ENCODE measurements at regions of chr2 and their contacts with region 1.

Region 1: GRCh38 chr2:226782092-226782713 is 17.4 kb downstream of the IRS1 start:
- DNase-seq: no peak
- H3K4me3 ChIP-seq: no peak overlapping the region
- H3K27ac ChIP-seq: no peak overlapping the region
- H3K4me1 ChIP-seq: no peaks in the 10 kb centered on the region
- H3K27me3 ChIP-seq: no peaks in the 10 kb centered on the region
- CTCF ChIP-seq: no peak

Region 2: GRCh38 chr2:226063704-226064440 is 718.3 kb before region 1 on chr2:
- CTCF ChIA-PET with region 1: no interaction called
- POLR2A ChIA-PET with region 1: interaction called, 12 read pairs
- intact Hi-C with region 1: no loop called
- DNase-seq: peak in 1 of 2 experiments; percentile 73
- H3K4me3 ChIP-seq: no peak overlapping the region
- H3K27ac ChIP-seq: peak overlapping the region; percentile 73
- H3K4me1 ChIP-seq: peaks cover 18% of the 10 kb centered on the region
- H3K27me3 ChIP-seq: no peaks in the 10 kb centered on the region
- CTCF ChIP-seq: no peak

Region 3: DNA sequence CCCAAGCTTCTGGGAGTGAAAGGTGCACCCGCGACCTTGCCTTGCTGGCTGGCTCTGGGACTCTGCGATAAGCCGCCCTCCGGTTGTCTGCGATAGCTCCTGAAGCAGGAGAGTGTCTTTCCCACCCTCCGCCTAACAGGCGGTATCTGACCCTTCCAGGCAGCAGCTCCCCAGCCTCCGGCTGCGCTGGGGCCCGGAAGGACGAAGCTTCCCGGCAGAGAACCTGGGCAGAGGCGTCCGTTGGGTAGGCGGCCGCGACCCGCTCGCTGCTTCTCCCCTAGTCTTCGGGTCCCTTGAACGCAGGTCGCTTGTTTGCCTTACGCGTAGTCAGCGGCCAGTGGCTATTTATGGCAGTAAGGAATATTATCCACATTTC is 53.2 kb after region 1 on chr2:
- CTCF ChIA-PET with region 1: no interaction called
- POLR2A ChIA-PET with region 1: no interaction called
- intact Hi-C with region 1: no loop called
- DNase-seq: no peak
- H3K4me3 ChIP-seq: peak overlapping the region; percentile 75
- H3K27ac ChIP-seq: peak overlapping the region; percentile 98
- H3K4me1 ChIP-seq: peaks cover 29% of the 10 kb centered on the region
- H3K27me3 ChIP-seq: no peaks in the 10 kb centered on the region
- CTCF ChIP-seq: no peak

Region 4: DNA sequence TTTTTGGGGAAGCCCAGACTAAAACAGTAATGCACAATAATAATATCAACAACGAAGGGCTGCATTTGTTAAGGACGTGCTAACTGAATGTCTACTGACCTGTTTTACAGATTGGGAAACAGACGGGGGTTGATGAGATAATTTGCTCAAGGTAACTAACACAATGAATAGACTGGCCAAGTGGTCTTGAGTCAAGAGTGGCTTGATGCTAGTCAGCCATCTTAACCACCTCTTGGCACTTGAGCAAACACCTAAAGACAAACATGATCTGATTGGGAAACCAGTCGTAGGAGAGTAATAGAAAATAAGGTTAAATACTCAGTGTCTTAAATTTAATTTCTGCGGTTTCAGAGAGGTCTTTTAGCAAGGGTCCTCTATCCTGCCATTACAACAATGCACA is 67.8 kb after region 1 on chr2:
- CTCF ChIA-PET with region 1: no interaction called
- POLR2A ChIA-PET with region 1: interaction called, 21 read pairs
- intact Hi-C with region 1: no loop called
- DNase-seq: no peak
- H3K4me3 ChIP-seq: no peak overlapping the region
- H3K27ac ChIP-seq: no peak overlapping the region
- H3K4me1 ChIP-seq: no peaks in the 10 kb centered on the region
- H3K27me3 ChIP-seq: no peaks in the 10 kb centered on the region
- CTCF ChIP-seq: no peak

Region 5: DNA sequence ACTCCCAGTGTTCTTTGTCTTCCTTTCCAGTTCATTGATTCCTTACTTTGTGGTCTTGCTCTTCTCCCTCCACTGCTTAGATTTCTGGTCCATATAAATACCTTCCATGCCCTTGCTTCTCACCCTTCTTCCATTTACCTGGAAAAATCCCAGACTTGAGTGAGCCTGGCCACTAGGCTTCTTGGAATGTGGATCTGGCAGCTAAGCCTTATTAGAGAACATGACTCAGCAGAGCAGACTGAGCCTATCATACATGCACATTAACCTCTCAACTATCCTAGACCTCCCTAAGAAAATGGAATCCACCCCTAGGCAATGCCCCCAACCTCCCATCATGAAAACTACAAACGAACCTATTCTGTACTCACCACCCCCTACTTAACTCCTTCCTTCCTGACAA is 181.3 kb after region 1 on chr2:
- CTCF ChIA-PET with region 1: no interaction called
- POLR2A ChIA-PET with region 1: no interaction called
- intact Hi-C with region 1: no loop called
- DNase-seq: no peak
- H3K4me3 ChIP-seq: no peak overlapping the region
- H3K27ac ChIP-seq: no peak overlapping the region
- H3K4me1 ChIP-seq: 0 out of 2 replicates have a peak, but pooled peaks cover 9% of the 10 kb centered on the region
- H3K27me3 ChIP-seq: no peaks in the 10 kb centered on the region
- CTCF ChIP-seq: no peak

Region 6: GRCh38 chr2:227006189-227006897 is 224.1 kb after region 1 on chr2:
- CTCF ChIA-PET with region 1: no interaction called
- POLR2A ChIA-PET with region 1: no interaction called
- intact Hi-C with region 1: no loop called
- DNase-seq: no peak
- H3K4me3 ChIP-seq: no peak overlapping the region
- H3K27ac ChIP-seq: no peak overlapping the region
- H3K4me1 ChIP-seq: no peaks in the 10 kb centered on the region
- H3K27me3 ChIP-seq: no peaks in the 10 kb centered on the region
- CTCF ChIP-seq: no peak